ENCODE measurements at regions of chr1 and their contacts with region 1.

Region 1: GRCh38 chr1:233304489-233305102 is 9.1 kb upstream of the PCNX2 start:
- DNase-seq: peak; percentile 17
- H3K4me3 ChIP-seq: no peak overlapping the region
- H3K27ac ChIP-seq: no peak overlapping the region
- H3K4me1 ChIP-seq: no peaks in the 10 kb centered on the region
- H3K27me3 ChIP-seq: peaks cover 2% of the 10 kb centered on the region
- CTCF ChIP-seq: peak; percentile 77 to 80

Region 2: DNA sequence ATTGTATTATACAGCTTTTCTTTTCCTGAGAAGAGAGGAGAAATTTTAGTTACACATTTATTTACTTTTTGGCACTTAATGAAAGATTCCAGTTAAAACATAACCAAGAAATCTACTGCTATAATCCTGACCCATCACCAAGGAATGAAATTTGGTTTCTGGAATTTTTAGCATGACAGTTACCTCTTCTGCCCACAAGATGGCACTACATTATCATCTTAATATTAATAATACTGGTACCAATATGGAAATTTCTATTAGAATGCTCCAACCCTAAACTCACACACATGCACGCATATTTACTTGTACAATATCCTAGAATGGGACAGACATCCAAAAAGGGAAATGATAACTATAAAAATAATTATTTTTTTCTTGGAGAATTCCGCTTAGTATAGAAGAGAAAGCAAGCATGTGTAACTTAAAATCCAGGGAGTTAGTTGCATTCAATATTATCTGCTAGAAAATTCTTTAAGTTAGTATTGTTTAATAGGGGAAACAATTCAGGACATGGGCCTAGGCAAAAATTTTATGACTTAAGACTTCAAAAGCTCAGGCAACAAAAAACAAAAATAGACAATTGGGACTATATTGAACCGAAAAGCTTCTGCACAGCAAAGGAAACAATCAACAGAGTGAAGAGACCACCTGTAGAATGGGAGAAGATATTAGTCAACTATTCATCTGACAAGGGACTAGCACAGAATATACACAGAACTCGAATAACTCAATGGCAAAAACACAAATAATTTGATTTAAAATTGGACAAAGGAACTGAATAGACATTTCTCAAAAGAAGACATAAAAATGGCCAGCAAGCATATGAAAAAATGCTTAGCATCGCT is 60.3 kb after region 1 on chr1:
- CTCF ChIA-PET with region 1: no interaction called
- dilution Hi-C with region 1: no loop called
- in situ Hi-C with region 1: no loop called
- intact Hi-C with region 1: loop called (anchors 1 kb)
- DNase-seq: no peak
- H3K4me3 ChIP-seq: no peak overlapping the region
- H3K27ac ChIP-seq: no peak overlapping the region
- H3K4me1 ChIP-seq: peaks cover 4% of the 10 kb centered on the region
- H3K27me3 ChIP-seq: no peaks in the 10 kb centered on the region
- CTCF ChIP-seq: peak; percentile 52 to 59